Activated CD4-positive, alpha-beta memory T cell treated with anti-CD3 and anti-CD28 coated beads for 36 hours (primary cell): ENCODE measurements at regions of chr4 and their contacts with region 1.

Region 1: GRCh38 chr4:70801265-70801809 is 38.4 kb downstream of the GRSF1 start:
- DNase-seq: peak; percentile 60
- H3K4me3 Mint-ChIP-seq: no peak overlapping the region
- H3K27ac Mint-ChIP-seq: no peak overlapping the region
- H3K4me1 Mint-ChIP-seq: peaks cover 10% of the 10 kb centered on the region
- H3K27me3 Mint-ChIP-seq: no peaks in the 10 kb centered on the region

Region 2: GRCh38 chr4:70678383-70678999 is 122.8 kb before region 1 on chr4:
- CTCF ChIA-PET with region 1: no interaction called
- POLR2A ChIA-PET with region 1: no interaction called
- intact Hi-C with region 1: no loop called
- DNase-seq: no peak
- H3K4me3 Mint-ChIP-seq: no peak overlapping the region
- H3K27ac Mint-ChIP-seq: no peak overlapping the region
- H3K4me1 Mint-ChIP-seq: peaks cover 8% of the 10 kb centered on the region
- H3K27me3 Mint-ChIP-seq: peaks cover 2% of the 10 kb centered on the region

Region 3: DNA sequence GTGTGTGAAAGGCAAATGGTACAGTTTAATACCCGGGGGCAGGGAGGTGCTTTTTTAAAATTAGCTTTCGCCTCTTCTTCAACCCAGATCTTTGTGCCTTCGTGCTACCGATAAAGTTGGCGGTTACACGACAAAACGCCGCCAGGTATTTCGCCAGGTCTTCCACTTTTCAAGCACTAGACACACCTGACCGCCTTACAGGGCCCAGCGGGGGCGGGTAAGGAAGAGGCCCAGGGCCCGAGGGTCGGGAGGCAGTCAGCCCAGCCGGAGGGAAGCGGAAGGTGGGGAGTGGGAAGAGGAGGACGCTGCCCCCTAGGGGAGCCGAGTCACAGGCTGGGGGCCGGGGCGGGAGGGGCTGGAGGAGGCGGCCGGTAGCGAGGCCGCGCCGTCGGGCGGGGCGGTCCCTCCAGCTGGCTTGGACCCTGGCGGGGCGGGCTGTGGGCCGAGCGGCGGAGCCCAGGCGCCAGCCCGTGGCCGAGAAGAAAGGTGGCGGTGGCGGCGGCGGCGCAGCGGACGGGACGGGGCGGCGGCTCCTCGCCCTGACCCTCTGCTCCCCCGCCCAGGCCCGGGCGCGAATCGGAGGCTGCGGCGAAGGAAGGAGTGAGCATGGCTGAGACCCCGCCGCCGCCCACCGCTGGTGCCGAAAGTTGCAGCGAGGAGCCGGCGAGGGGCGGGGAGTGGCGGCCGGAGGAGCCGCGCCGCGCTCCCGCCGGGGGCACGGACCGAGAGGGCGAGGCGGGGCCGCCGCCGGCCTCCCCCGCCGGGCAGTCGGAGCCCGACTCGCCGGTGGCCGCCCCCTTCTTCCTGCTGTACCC is 96.8 kb before region 1 on chr4:
- CTCF ChIA-PET with region 1: interaction called, 4 read pairs
- POLR2A ChIA-PET with region 1: no interaction called
- intact Hi-C with region 1: loop called (anchors 1 kb)
- DNase-seq: peak; percentile 75
- H3K4me3 Mint-ChIP-seq: peak overlapping the region; percentile 85
- H3K27ac Mint-ChIP-seq: peak overlapping the region; percentile 80
- H3K4me1 Mint-ChIP-seq: peaks cover 25% of the 10 kb centered on the region
- H3K27me3 Mint-ChIP-seq: no peaks in the 10 kb centered on the region

Region 4: GRCh38 chr4:70754990-70755688 is 46.2 kb before region 1 on chr4:
- CTCF ChIA-PET with region 1: no interaction called
- POLR2A ChIA-PET with region 1: no interaction called
- intact Hi-C with region 1: loop called (anchors 5 kb)
- DNase-seq: no peak
- H3K4me3 Mint-ChIP-seq: no peak overlapping the region
- H3K27ac Mint-ChIP-seq: no peak overlapping the region
- H3K4me1 Mint-ChIP-seq: peaks cover 19% of the 10 kb centered on the region
- H3K27me3 Mint-ChIP-seq: no peaks in the 10 kb centered on the region

Region 5: DNA sequence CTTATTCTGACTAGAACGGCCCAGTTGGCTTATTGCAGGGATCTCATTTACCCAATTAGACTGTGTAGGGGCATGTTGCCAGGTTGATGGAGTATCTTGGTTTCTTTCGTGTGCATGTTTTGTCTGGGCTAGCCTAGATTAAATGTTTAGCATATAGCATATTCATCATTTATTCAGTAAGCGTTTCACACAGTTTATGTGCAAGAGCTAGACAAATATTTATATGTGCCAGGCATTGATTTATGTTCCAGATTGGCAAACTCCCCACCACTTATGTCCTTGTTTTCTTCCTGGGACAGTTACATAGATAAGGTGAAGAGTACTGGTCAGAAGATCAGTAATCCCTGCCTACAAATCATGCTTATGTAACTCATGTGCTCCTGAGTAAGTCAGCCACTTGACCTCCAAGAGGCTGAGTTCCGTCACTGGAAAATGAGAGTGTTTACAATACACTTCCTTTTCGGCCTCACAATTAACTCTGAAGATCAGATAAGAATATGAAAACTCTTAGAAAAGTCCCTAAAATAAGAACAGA is 22.4 kb before region 1 on chr4:
- CTCF ChIA-PET with region 1: no interaction called
- POLR2A ChIA-PET with region 1: no interaction called
- intact Hi-C with region 1: no loop called
- DNase-seq: no peak
- H3K4me3 Mint-ChIP-seq: no peak overlapping the region
- H3K27ac Mint-ChIP-seq: no peak overlapping the region
- H3K4me1 Mint-ChIP-seq: no peaks in the 10 kb centered on the region
- H3K27me3 Mint-ChIP-seq: no peaks in the 10 kb centered on the region